Activated B cell treated with CpG ODN at 0.5 μM for 24 hours (primary cell): ENCODE measurements at regions of chr6 and their contacts with region 1.

Region 1: GRCh38 chr6:11258260-11259237 is 26.1 kb upstream of the NEDD9 start:
- DNase-seq: no peak
- ATAC-seq: peak; percentile 10
- H3K4me3 Mint-ChIP-seq: no peak overlapping the region
- H3K27ac Mint-ChIP-seq: peak overlapping the region; percentile 26
- H3K4me1 Mint-ChIP-seq: peaks cover 37% of the 10 kb centered on the region
- H3K27me3 Mint-ChIP-seq: no peaks in the 10 kb centered on the region
- CTCF ChIP-seq: no peak

Region 2: GRCh38 chr6:11241793-11242201 is 16.8 kb before region 1 on chr6:
- CTCF ChIA-PET with region 1: no interaction called
- POLR2A ChIA-PET with region 1: no interaction called
- intact Hi-C with region 1: loop called (anchors 2 kb)
- DNase-seq: no peak
- ATAC-seq: no peak
- H3K4me3 Mint-ChIP-seq: no peak overlapping the region
- H3K27ac Mint-ChIP-seq: no peak overlapping the region
- H3K4me1 Mint-ChIP-seq: peaks cover 12% of the 10 kb centered on the region
- H3K27me3 Mint-ChIP-seq: no peaks in the 10 kb centered on the region
- CTCF ChIP-seq: no peak